CD4-positive, alpha-beta memory T cell (primary cell): ENCODE measurements at regions of chr7 and their contacts with region 1.

Region 1: GRCh38 chr7:6323967-6324701 is 51.7 kb upstream of the CYTH3 start:
- DNase-seq: no peak
- H3K4me3 ChIP-seq: no peak overlapping the region
- H3K4me3 Mint-ChIP-seq: no peak overlapping the region
- H3K27ac ChIP-seq: no peak overlapping the region
- H3K27ac Mint-ChIP-seq: no peak overlapping the region
- H3K4me1 ChIP-seq: no peaks in the 10 kb centered on the region
- H3K4me1 Mint-ChIP-seq: peaks cover 4 to 5% (median 4%) of the 10 kb centered on the region in 4 donors
- H3K27me3 ChIP-seq: no peaks in the 10 kb centered on the region
- H3K27me3 Mint-ChIP-seq: peaks cover 3% of the 10 kb centered on the region in 2 donors

Region 2: GRCh38 chr7:6008668-6009611 is 315.2 kb before region 1 on chr7 and contains the starts of genes AIMP2 and PMS2:
- CTCF ChIA-PET with region 1: interaction called, 10 read pairs
- POLR2A ChIA-PET with region 1: no interaction called
- intact Hi-C with region 1: no loop called
- DNase-seq: peak; percentile 93 to 97 (median 94)
- H3K4me3 ChIP-seq: peak within 1 kb of the TSS; percentile 70 to 73
- H3K4me3 Mint-ChIP-seq: peak within 1 kb of the TSS; percentile 92 to 97 (median 95)
- H3K27ac ChIP-seq: peak within 1 kb of the TSS; percentile 86
- H3K27ac Mint-ChIP-seq: peak within 1 kb of the TSS; percentile 93 to 98 (median 97)
- H3K4me1 ChIP-seq: peaks cover 21% of the 10 kb centered on the region
- H3K4me1 Mint-ChIP-seq: peaks cover 18 to 37% (median 25%) of the 10 kb centered on the region in 4 donors
- H3K27me3 ChIP-seq: no peaks in the 10 kb centered on the region
- H3K27me3 Mint-ChIP-seq: no peaks in the 10 kb centered on the region
- total RNA-seq, gene AIMP2: 10.7 to 10.8 TPM
- total RNA-seq, gene PMS2: 22.7 to 23.2 TPM

Region 3: GRCh38 chr7:6106140-6106904 is 217.8 kb before region 1 on chr7:
- CTCF ChIA-PET with region 1: interaction called, 11 read pairs
- POLR2A ChIA-PET with region 1: no interaction called
- intact Hi-C with region 1: loop called (anchors 2 kb)
- DNase-seq: peak; percentile 41 to 58 (median 52)
- H3K4me3 ChIP-seq: peak overlapping the region; percentile 44 to 67
- H3K4me3 Mint-ChIP-seq: peak overlapping the region; percentile 87 to 98 (median 94)
- H3K27ac ChIP-seq: peak overlapping the region; percentile 86
- H3K27ac Mint-ChIP-seq: peak overlapping the region; percentile 88 to 98 (median 96)
- H3K4me1 ChIP-seq: peaks cover 30% of the 10 kb centered on the region
- H3K4me1 Mint-ChIP-seq: peaks cover 23 to 40% (median 32%) of the 10 kb centered on the region in 4 donors
- H3K27me3 ChIP-seq: no peaks in the 10 kb centered on the region
- H3K27me3 Mint-ChIP-seq: no peaks in the 10 kb centered on the region

Region 4: GRCh38 chr7:6338551-6339274 is 14.6 kb after region 1 on chr7:
- CTCF ChIA-PET with region 1: interaction called, 20 read pairs
- POLR2A ChIA-PET with region 1: no interaction called
- intact Hi-C with region 1: no loop called
- DNase-seq: no peak
- H3K4me3 ChIP-seq: no peak overlapping the region
- H3K4me3 Mint-ChIP-seq: peak overlapping the region in 1 of 8 donors; percentile 28
- H3K27ac ChIP-seq: no peak overlapping the region
- H3K27ac Mint-ChIP-seq: no peak overlapping the region
- H3K4me1 ChIP-seq: peaks cover 2% of the 10 kb centered on the region
- H3K4me1 Mint-ChIP-seq: peaks cover 0 to 14% (median 9%) of the 10 kb centered on the region in 4 donors
- H3K27me3 ChIP-seq: no peaks in the 10 kb centered on the region
- H3K27me3 Mint-ChIP-seq: no peaks in the 10 kb centered on the region